Gastrocnemius medialis (tissue), 4 donors: ENCODE measurements at regions of chr17 and their contacts with region 1.

Region 1: GRCh38 chr17:72539981-72540897 is 419.4 kb downstream of the SOX9 start:
- DNase-seq: peak; percentile 10 to 33
- ATAC-seq: peak; percentile 83 to 85
- H3K4me3 ChIP-seq: peak overlapping the region in 1 of 4 donors; percentile 28
- H3K27ac ChIP-seq: no peak overlapping the region
- H3K4me1 ChIP-seq: peaks cover 0 to 3% of the 10 kb centered on the region in 2 donors
- H3K27me3 ChIP-seq: no peaks in the 10 kb centered on the region
- CTCF ChIP-seq: peak; percentile 80 to 96 (median 94)
- POLR2A ChIP-seq: no peak

Region 2: GRCh38 chr17:70636517-70637133 is 1903.6 kb before region 1 on chr17:
- in situ Hi-C with region 1: loop called (anchors 5 to 10 kb)
- intact Hi-C with region 1: loop called (anchors 1 kb)
- DNase-seq: no peak
- ATAC-seq: no peak
- H3K4me3 ChIP-seq: no peak overlapping the region
- H3K27ac ChIP-seq: no peak overlapping the region
- H3K4me1 ChIP-seq: no peaks in the 10 kb centered on the region
- H3K27me3 ChIP-seq: no peaks in the 10 kb centered on the region
- CTCF ChIP-seq: peak; percentile 55 to 76 (median 61)
- POLR2A ChIP-seq: no peak

Region 3: GRCh38 chr17:70644096-70644495 is 1896.1 kb before region 1 on chr17:
- in situ Hi-C with region 1: loop called (anchors 5 to 10 kb)
- intact Hi-C with region 1: no loop called
- DNase-seq: no peak
- ATAC-seq: no peak
- H3K4me3 ChIP-seq: no peak overlapping the region
- H3K27ac ChIP-seq: no peak overlapping the region
- H3K4me1 ChIP-seq: no peaks in the 10 kb centered on the region
- H3K27me3 ChIP-seq: no peaks in the 10 kb centered on the region
- CTCF ChIP-seq: no peak
- POLR2A ChIP-seq: no peak

Region 4: GRCh38 chr17:71118039-71118438 is 1422.2 kb before region 1 on chr17:
- in situ Hi-C with region 1: loop called in 1 of 4 experiments (anchors 25 kb)
- intact Hi-C with region 1: loop called (anchors 1 kb)
- DNase-seq: no peak
- ATAC-seq: no peak
- H3K4me3 ChIP-seq: no peak overlapping the region
- H3K27ac ChIP-seq: no peak overlapping the region
- H3K4me1 ChIP-seq: no peaks in the 10 kb centered on the region
- H3K27me3 ChIP-seq: no peaks in the 10 kb centered on the region
- CTCF ChIP-seq: peak in 2 of 5 experiments; percentile 24 to 34
- POLR2A ChIP-seq: no peak

Region 5: DNA sequence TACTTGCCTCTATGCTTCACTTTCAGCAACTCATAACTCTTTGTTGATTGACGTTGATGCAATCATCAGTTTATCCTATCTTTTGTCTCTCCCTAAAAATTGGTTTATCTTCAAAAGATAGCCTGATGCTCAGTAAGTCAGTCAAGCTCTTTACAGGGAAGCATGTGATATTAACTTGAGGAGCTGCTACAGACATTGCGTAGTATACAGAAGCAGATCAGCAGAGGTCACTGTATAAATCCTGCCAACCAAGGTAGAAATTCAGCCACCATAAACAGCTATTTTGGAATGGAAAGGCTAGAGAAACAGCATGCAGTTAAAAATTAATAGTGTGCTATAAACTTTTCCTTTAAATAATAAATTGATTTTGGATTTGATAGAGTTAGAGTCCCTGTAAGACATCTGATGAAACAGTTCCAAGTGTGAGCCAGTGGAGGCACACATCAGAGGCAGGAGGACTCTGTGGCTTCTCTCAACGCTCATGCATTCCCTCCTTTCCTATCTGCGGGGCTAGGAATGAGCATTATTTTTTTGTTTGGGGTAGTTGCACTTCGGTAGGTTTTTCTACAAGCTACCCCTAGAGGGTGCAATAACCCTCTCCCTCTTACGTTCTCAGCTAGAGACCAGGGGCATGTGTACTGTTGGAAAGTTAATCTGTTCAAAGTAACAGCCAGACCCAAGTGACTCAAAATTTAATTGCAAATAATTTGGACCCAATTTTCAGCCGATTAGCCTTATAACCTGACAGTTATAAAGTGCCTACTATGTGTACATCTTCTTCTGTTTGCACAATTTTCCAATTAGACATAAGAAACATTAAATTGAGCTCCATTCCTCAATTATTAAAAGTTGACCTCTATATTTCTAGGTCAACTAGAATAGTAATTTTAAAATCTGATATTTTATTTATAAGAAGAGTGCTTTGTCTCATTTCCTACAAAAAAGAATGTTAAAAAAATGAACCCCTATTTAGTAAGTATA is 1067.1 kb before region 1 on chr17:
- in situ Hi-C with region 1: loop called in 1 of 4 experiments (anchors 25 kb)
- intact Hi-C with region 1: loop called (anchors 1 kb)
- DNase-seq: no peak
- ATAC-seq: peak in 1 of 2 donors; percentile 71
- H3K4me3 ChIP-seq: no peak overlapping the region
- H3K27ac ChIP-seq: no peak overlapping the region
- H3K4me1 ChIP-seq: no peaks in the 10 kb centered on the region
- H3K27me3 ChIP-seq: no peaks in the 10 kb centered on the region
- CTCF ChIP-seq: peak; percentile 20 to 57 (median 32)
- POLR2A ChIP-seq: no peak

Region 6: GRCh38 chr17:72439893-72440502 is 100.2 kb before region 1 on chr17:
- in situ Hi-C with region 1: no loop called
- intact Hi-C with region 1: no loop called
- DNase-seq: no peak
- ATAC-seq: no peak
- H3K4me3 ChIP-seq: no peak overlapping the region
- H3K27ac ChIP-seq: no peak overlapping the region
- H3K4me1 ChIP-seq: no peaks in the 10 kb centered on the region
- H3K27me3 ChIP-seq: no peaks in the 10 kb centered on the region
- CTCF ChIP-seq: no peak
- POLR2A ChIP-seq: no peak